ENCODE measurements at regions of chrX and their contacts with region 1.

Region 1: DNA sequence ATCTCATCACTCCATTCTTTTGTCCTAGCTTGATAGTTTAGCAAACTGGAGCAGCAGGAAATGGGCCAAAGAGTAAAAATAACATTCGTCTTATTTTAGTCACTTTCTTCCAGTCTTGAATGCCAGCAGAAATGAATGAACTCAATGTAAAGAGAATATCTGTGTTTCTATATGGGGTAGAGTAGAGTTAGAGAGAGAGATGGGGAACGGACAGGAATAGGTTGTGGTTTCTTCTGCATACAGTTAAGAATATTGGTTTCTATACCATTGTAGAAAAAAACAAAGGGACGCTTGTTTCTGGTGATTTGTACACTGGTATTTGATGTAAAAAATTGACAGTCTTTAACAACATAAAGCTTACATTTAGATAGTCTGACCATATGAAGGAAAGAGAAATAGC is 8.9 kb downstream of the GPR174 start:
- DNase-seq: no peak
- H3K4me3 Mint-ChIP-seq: peak overlapping the region; percentile 75
- H3K27ac Mint-ChIP-seq: peak overlapping the region; percentile 94
- H3K4me1 Mint-ChIP-seq: peaks cover 62% of the 10 kb centered on the region
- H3K27me3 Mint-ChIP-seq: no peaks in the 10 kb centered on the region

Region 2: DNA sequence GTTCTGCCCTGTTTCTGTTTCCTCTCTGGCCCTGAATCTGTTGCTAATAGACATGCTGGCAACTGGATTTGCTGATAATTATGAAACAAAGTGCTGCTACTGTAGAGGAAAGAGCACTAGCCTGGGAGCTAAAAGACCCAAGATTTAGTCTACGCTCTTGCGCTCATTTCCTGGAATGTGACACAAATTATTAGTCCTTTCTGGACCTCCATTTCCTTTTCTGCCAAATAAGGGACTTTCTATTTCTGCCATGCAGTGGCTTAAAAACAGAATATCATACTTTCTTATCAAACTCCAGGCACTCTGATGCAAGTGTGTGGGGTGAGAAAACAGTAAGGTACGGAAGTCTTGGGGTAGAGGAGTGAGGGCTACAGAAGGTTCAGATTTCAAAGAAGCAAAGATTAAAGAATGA is 57.2 kb before region 1 on chrX:
- CTCF ChIA-PET with region 1: no interaction called
- POLR2A ChIA-PET with region 1: interaction called, 6 read pairs
- intact Hi-C with region 1: loop called (anchors 2 kb)
- DNase-seq: no peak
- H3K4me3 Mint-ChIP-seq: peak overlapping the region; percentile 60
- H3K27ac Mint-ChIP-seq: peak overlapping the region; percentile 89
- H3K4me1 Mint-ChIP-seq: peaks cover 77% of the 10 kb centered on the region
- H3K27me3 Mint-ChIP-seq: no peaks in the 10 kb centered on the region

Region 3: DNA sequence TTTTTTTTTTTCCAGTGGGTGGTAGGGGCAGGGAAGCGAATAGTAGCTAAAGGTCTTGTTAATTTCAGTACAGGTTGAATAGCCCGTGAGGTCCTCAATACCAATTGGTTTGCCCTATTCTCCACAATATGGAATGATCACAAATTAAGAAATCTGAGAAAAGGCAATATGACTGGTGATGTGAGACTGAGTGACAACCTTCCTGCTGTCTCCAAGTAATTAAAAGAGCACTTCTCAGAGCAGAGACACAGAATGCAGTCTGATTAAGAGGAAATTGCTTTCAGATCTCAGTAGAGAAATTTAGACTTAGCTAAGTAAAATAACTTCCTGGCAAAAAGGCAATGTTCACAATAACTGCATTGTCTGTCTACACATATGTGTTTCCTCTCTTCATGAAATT is 14.1 kb after region 1 on chrX:
- CTCF ChIA-PET with region 1: interaction called, 4 read pairs
- POLR2A ChIA-PET with region 1: interaction called, 57 read pairs
- intact Hi-C with region 1: no loop called
- DNase-seq: no peak
- H3K4me3 Mint-ChIP-seq: peak overlapping the region; percentile 66
- H3K27ac Mint-ChIP-seq: peak overlapping the region; percentile 96
- H3K4me1 Mint-ChIP-seq: peaks cover 75% of the 10 kb centered on the region
- H3K27me3 Mint-ChIP-seq: no peaks in the 10 kb centered on the region

Measured in activated CD4-positive, alpha-beta memory T cell treated with anti-CD3 and anti-CD28 coated beads for 36 hours (primary cell).